HEK293 (cell line): ENCODE measurements at regions of chr17 and their contacts with region 1.

Region 1: GRCh38 chr17:37818689-37819088 is 73.8 kb upstream of the HNF1B start:
- H3K4me3 ChIP-seq: no peak overlapping the region
- H3K27ac ChIP-seq: no peak overlapping the region
- H3K4me1 ChIP-seq: no peaks in the 10 kb centered on the region
- CTCF ChIP-seq: no peak

Region 2: DNA sequence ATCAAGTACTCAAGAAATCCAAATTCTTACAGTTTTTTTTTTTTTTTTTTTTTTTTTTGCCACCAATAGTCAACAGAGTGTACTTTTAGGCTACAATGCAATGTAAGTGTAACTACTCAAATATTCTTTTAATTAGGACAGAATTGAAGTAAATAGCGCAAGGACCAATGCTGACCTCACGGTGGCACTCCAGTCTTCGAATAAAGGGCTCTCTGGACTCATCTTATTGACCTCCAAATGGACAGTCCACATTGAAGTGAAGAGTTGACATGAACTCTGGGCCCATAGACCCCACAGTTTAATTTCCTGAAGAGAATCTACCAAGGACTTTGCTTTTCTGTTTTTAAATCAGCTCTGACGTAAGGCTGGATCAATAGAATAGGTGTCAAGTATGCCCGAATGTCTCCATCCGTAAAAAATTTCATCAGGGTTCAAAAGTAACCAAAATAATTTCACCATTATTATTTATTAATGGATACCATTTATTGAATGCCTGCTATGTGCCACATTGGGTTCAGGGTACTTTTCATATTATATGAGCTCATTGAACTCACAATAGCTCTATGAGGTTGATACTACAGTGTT is 168.2 kb before region 1 on chr17:
- CTCF ChIA-PET with region 1: interaction called, 56 read pairs
- POLR2A ChIA-PET with region 1: no interaction called
- H3K4me3 ChIP-seq: no peak overlapping the region
- H3K27ac ChIP-seq: no peak overlapping the region
- H3K4me1 ChIP-seq: no peaks in the 10 kb centered on the region
- CTCF ChIP-seq: no peak

Region 3: DNA sequence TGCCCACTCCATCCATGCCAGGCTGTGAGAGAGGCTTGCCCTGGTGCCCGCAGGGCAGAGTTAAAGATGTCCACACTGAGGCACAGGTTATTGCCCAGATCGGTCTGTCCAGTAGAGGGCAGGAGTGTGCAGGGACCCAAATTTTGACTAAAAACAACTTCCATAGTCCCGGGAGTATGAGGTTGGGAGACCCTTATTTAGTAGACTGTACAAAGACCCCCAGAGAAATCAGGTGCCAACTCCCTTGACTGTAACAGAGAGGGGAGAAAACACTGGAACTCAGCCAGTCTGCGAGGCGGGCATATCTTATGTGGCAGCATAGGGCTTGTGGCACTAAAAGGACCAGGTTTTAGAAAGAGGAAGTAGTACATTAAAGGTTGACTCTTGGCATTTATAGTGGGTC is 117.2 kb before region 1 on chr17:
- CTCF ChIA-PET with region 1: interaction called, 30 read pairs
- POLR2A ChIA-PET with region 1: no interaction called
- H3K4me3 ChIP-seq: no peak overlapping the region
- H3K27ac ChIP-seq: no peak overlapping the region
- H3K4me1 ChIP-seq: no peaks in the 10 kb centered on the region
- CTCF ChIP-seq: 0 out of 2 replicates have a peak, but pooled peaks have one; percentile 30